ENCODE measurements at regions of chr6 and their contacts with region 1.

Region 1: GRCh38 chr6:85323435-85324040 is 126.3 kb upstream of the NT5E start:
- DNase-seq: peak; percentile 89
- H3K4me3 Mint-ChIP-seq: no peak overlapping the region
- H3K27ac Mint-ChIP-seq: no peak overlapping the region
- H3K4me1 Mint-ChIP-seq: no peaks in the 10 kb centered on the region
- H3K27me3 Mint-ChIP-seq: no peaks in the 10 kb centered on the region
- CTCF ChIP-seq: peak; percentile 85

Region 2: DNA sequence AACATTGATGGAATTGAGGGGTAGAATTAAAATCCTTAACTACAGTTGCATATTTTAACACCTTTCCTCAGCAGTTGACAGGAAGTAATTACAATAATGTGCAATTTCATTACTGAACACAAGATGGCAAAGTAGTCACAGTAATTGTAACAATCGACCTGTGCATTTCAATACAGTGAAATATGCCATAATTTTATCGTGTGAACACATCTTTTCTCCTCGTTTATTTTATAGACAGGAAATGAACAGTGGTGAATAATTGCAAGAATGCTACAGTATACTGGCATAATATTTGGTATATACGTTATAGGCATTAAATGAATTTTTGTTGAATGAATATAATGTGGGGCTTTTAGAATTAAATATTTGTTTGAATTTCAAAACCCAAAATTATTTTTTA is 1439.0 kb before region 1 on chr6:
- CTCF ChIA-PET with region 1: interaction called, 5 read pairs
- POLR2A ChIA-PET with region 1: no interaction called
- intact Hi-C with region 1: loop called (anchors 10 kb)
- DNase-seq: peak; percentile 52
- H3K4me3 Mint-ChIP-seq: no peak overlapping the region
- H3K27ac Mint-ChIP-seq: peak overlapping the region; percentile 3
- H3K4me1 Mint-ChIP-seq: peaks cover 9% of the 10 kb centered on the region
- H3K27me3 Mint-ChIP-seq: no peaks in the 10 kb centered on the region
- CTCF ChIP-seq: peak; percentile 69

Region 3: GRCh38 chr6:84243240-84243639 is 1080.3 kb before region 1 on chr6:
- CTCF ChIA-PET with region 1: interaction called, 15 read pairs
- POLR2A ChIA-PET with region 1: no interaction called
- intact Hi-C with region 1: loop called (anchors 2 kb)
- DNase-seq: no peak
- H3K4me3 Mint-ChIP-seq: no peak overlapping the region
- H3K27ac Mint-ChIP-seq: no peak overlapping the region
- H3K4me1 Mint-ChIP-seq: no peaks in the 10 kb centered on the region
- H3K27me3 Mint-ChIP-seq: no peaks in the 10 kb centered on the region
- CTCF ChIP-seq: peak; percentile 27

Region 4: DNA sequence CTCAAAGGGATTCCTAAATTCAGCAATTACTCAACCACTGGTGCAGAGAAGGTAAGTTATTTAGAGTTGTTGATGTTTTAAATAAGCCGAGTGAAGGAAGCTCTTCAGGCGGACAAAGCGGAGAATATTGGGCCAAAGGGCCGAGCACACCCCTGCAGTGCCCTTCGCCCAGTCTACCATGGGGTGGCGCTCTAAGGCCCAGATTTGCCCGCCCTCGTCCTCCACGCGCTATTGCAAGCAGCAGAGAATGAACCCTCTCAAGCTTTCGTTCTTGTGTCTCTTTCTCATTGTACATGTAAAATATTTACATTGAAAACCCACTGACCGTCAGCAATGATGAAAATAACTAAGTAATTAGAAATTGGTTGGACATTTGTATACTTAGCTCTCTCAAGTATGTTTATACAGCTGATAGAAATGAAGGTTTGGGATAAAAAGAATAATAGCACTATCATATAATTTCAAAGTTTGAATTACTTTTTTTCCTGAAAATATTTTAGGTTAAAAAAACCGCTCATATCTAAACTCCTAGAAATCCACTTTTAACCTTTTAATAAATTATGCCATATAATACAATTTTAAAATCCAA is 901.1 kb before region 1 on chr6:
- CTCF ChIA-PET with region 1: interaction called, 20 read pairs
- POLR2A ChIA-PET with region 1: no interaction called
- intact Hi-C with region 1: loop called (anchors 1 kb)
- DNase-seq: peak; percentile 67
- H3K4me3 Mint-ChIP-seq: no peak overlapping the region
- H3K27ac Mint-ChIP-seq: no peak overlapping the region
- H3K4me1 Mint-ChIP-seq: no peaks in the 10 kb centered on the region
- H3K27me3 Mint-ChIP-seq: no peaks in the 10 kb centered on the region
- CTCF ChIP-seq: peak; percentile 78

Region 5: DNA sequence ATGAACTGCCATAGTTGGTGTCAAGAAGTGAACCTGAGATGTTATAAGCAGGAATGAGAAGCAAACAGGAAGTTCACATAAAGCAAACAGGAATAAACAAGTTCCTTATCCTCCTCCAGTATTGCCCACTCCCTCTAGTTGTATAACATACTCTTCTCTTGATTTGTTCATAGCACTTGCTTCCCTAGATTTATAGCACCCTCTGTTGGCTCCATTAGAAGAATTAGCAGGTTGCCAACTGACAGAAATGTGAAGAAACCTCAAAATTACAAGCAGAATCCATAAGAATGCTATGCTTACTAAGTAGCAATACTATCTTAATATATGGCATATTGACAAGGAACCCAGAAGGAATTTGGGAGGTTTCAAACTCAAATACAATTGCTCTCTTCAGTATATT is 754.6 kb before region 1 on chr6:
- CTCF ChIA-PET with region 1: no interaction called
- POLR2A ChIA-PET with region 1: no interaction called
- intact Hi-C with region 1: loop called (anchors 10 kb)
- DNase-seq: peak; percentile 35
- H3K4me3 Mint-ChIP-seq: no peak overlapping the region
- H3K27ac Mint-ChIP-seq: no peak overlapping the region
- H3K4me1 Mint-ChIP-seq: no peaks in the 10 kb centered on the region
- H3K27me3 Mint-ChIP-seq: no peaks in the 10 kb centered on the region
- CTCF ChIP-seq: no peak

Region 6: DNA sequence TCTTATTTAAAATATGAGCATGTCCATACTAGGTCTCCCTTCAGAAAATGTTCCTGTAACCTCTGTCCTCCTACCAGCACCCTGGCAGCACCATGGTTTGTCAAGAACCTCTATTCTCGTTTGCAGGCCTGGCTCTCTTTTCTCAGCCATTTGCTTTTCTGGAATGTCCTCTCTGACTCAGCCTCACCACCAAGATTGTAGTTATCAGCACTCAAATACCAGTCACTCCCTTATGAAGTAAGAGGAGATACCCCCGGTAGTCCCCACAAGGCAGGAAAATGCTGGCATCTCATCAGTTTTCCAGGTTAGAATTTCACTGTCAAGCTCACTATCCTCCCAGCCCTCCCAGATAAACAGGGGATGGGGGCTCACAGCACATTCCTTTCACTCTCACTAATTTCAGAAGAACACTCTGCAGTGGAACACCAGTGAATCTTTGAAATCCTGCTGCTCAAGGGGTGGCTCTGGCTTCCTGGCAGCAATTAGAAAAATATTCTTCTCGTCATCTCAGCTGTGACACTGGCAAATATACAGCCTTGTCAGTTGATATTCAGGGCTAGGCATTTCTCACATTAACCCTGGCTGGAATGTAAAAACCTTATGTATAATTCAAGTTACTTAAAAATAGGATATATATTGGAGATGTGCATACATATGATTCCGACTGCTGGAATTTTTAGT is 688.3 kb before region 1 on chr6:
- CTCF ChIA-PET with region 1: no interaction called
- POLR2A ChIA-PET with region 1: no interaction called
- intact Hi-C with region 1: no loop called
- DNase-seq: no peak
- H3K4me3 Mint-ChIP-seq: no peak overlapping the region
- H3K27ac Mint-ChIP-seq: peak overlapping the region; percentile 28
- H3K4me1 Mint-ChIP-seq: peaks cover 25% of the 10 kb centered on the region
- H3K27me3 Mint-ChIP-seq: no peaks in the 10 kb centered on the region
- CTCF ChIP-seq: no peak

Region 7: GRCh38 chr6:85015396-85015990 is 308.0 kb before region 1 on chr6:
- CTCF ChIA-PET with region 1: interaction called, 4 read pairs
- POLR2A ChIA-PET with region 1: no interaction called
- intact Hi-C with region 1: loop called (anchors 1 kb)
- DNase-seq: peak; percentile 64
- H3K4me3 Mint-ChIP-seq: no peak overlapping the region
- H3K27ac Mint-ChIP-seq: no peak overlapping the region
- H3K4me1 Mint-ChIP-seq: no peaks in the 10 kb centered on the region
- H3K27me3 Mint-ChIP-seq: no peaks in the 10 kb centered on the region
- CTCF ChIP-seq: peak; percentile 65

Region 8: DNA sequence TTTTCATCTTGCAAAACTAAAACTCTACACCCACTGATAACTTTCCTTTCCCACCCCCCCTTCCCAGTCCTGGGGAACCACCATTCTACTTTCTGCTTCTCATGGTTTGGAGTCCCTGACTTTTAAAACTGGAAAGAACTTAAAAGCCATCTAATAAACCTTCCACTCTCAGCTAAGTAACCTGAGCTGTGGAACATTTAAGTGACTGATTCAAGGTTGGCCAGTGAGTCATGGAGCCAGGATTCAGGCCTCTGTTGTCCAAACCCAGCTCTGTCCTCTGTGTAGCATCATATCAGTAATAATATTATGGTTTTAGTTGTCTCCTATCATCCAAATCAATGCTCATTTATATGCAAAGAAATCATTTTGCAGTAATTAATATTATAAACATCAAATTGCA is 49.7 kb before region 1 on chr6:
- CTCF ChIA-PET with region 1: no interaction called
- POLR2A ChIA-PET with region 1: no interaction called
- intact Hi-C with region 1: no loop called
- DNase-seq: peak; percentile 22
- H3K4me3 Mint-ChIP-seq: no peak overlapping the region
- H3K27ac Mint-ChIP-seq: no peak overlapping the region
- H3K4me1 Mint-ChIP-seq: no peaks in the 10 kb centered on the region
- H3K27me3 Mint-ChIP-seq: no peaks in the 10 kb centered on the region
- CTCF ChIP-seq: no peak

Measured in MCF 10A (cell line).